HEK293 (cell line): ENCODE measurements at regions of chr12 and their contacts with region 1.

Region 1: GRCh38 chr12:28872654-28873268 is 276.3 kb upstream of the FAR2 start:
- H3K4me3 ChIP-seq: no peak overlapping the region
- H3K27ac ChIP-seq: no peak overlapping the region
- H3K4me1 ChIP-seq: peaks cover 13% of the 10 kb centered on the region; the same call in 1 of the 2 replicates
- CTCF ChIP-seq: peak; percentile 41; the same call in 1 of the 2 replicates

Region 2: GRCh38 chr12:27733052-27733656 is 1139.6 kb before region 1 on chr12:
- CTCF ChIA-PET with region 1: interaction called, 10 read pairs
- POLR2A ChIA-PET with region 1: no interaction called
- H3K4me3 ChIP-seq: no peak overlapping the region
- H3K27ac ChIP-seq: no peak overlapping the region
- H3K4me1 ChIP-seq: no peaks in the 10 kb centered on the region
- CTCF ChIP-seq: no peak

Region 3: DNA sequence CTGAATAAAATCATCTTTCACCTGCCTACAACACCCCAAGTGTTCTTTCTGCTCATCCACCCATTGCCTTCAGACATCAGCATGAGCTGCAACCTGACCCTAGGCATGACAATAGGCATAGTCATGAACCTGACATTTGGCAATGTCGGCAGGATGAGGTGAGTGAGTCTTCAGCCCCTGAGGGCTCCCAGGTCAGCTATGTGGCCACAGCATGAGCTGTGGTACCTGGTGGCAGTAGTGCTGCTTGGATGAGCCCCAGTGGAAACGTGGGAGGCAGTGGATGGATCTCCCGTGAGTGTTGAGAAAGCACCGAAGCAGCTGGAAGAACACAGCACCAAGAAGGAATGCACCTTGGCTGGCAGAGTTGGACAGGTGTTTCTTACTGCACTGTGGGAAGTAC is 58.5 kb before region 1 on chr12:
- CTCF ChIA-PET with region 1: no interaction called
- POLR2A ChIA-PET with region 1: no interaction called
- H3K4me3 ChIP-seq: no peak overlapping the region
- H3K27ac ChIP-seq: no peak overlapping the region
- H3K4me1 ChIP-seq: no peaks in the 10 kb centered on the region
- CTCF ChIP-seq: no peak